ENCODE measurements at regions of chr14 and their contacts with region 1.

Region 1: GRCh38 chr14:53539489-53540126 is 386.5 kb upstream of the DDHD1 start:
- H3K4me3 Mint-ChIP-seq: no peak overlapping the region
- H3K27ac Mint-ChIP-seq: no peak overlapping the region
- H3K4me1 Mint-ChIP-seq: no peaks in the 10 kb centered on the region
- H3K27me3 Mint-ChIP-seq: no peaks in the 10 kb centered on the region

Region 2: DNA sequence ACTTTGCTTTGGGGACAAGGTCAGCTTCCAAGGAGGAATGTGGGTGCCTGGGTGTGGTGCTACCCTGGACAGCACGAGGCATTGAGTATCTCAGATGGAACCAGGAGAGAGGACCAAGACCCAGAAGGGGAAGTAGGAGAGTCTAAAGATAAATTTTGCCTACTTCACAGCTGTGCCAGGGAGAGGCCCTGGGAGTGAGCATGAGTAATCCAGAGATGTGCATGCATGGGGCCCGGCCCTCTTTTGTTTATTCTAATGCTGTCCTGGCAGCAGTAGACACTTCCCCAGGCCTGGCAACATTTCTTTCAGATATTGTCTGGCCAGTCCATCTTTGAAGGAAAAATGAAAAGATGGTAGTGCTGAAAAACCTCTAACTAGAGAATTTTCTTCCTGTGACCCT is 698.7 kb before region 1 on chr14:
- intact Hi-C with region 1: no loop called
- H3K4me3 Mint-ChIP-seq: no peak overlapping the region
- H3K27ac Mint-ChIP-seq: no peak overlapping the region
- H3K4me1 Mint-ChIP-seq: peaks cover 18% of the 10 kb centered on the region
- H3K27me3 Mint-ChIP-seq: no peaks in the 10 kb centered on the region

Region 3: GRCh38 chr14:54175298-54175942 is 635.8 kb after region 1 on chr14:
- intact Hi-C with region 1: loop called (anchors 5 kb)
- H3K4me3 Mint-ChIP-seq: no peak overlapping the region
- H3K27ac Mint-ChIP-seq: no peak overlapping the region
- H3K4me1 Mint-ChIP-seq: no peaks in the 10 kb centered on the region
- H3K27me3 Mint-ChIP-seq: peaks cover 13% of the 10 kb centered on the region

Measured in dendritic cell treated with granulocyte-macrophage colony-stimulating factor and Interleukin-4, amounts not matched to agents 40 ng/mL and 50 ng/mL, for 4 days (primary cell).